ENCODE measurements at regions of chr1 and their contacts with region 1.

Region 1: DNA sequence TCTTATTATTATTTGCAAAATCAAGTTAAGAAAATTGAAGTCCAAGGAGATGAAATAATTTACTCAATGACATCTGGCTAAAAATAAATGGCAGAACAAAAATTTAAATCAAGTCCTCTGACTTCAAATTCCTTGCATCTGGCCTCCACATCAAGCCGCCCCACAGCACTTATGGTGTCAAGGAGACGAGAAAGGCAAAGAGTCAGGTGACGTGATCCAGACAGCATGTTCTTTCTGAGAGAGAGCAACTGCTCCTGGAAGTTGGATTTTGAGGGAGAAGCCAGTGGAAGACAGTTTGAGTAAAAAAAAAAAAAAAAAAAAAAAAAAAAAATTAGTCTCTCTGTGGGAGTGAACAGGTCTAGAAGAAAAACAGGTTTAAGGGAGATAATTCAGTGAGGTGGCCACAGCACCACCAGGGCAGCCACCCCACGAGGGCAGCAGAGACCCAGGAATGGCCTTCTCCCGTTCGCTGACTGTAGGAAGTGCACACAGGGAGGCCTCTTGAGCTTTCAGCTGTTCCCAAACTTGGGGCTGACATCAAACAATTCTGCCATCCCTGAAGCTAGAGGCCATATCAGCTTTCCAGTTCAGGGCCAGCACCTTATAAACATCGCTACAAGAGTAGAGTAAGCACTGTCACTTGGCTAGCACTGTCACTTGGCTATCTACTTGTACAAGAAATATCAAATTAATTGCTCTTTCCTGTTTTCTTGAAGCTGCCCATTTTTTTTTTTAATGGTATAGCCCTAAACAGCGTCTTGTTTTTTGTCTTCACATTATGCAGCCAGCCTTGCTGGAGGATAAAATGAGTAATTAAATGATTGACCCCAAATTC is 7.8 kb downstream of the C1orf162 start:
- DNase-seq: peak; percentile 76
- ATAC-seq: peak; percentile 52
- H3K4me3 ChIP-seq: no peak overlapping the region
- H3K4me3 Mint-ChIP-seq: no peak overlapping the region
- H3K27ac ChIP-seq: no peak overlapping the region
- H3K27ac Mint-ChIP-seq: peak overlapping the region; percentile 43
- H3K4me1 ChIP-seq: peaks cover 38 to 42% of the 10 kb centered on the region in 2 donors
- H3K4me1 Mint-ChIP-seq: peaks cover 46% of the 10 kb centered on the region
- H3K27me3 ChIP-seq: no peaks in the 10 kb centered on the region
- H3K27me3 Mint-ChIP-seq: no peaks in the 10 kb centered on the region
- CTCF ChIP-seq: peak; percentile 55

Region 2: DNA sequence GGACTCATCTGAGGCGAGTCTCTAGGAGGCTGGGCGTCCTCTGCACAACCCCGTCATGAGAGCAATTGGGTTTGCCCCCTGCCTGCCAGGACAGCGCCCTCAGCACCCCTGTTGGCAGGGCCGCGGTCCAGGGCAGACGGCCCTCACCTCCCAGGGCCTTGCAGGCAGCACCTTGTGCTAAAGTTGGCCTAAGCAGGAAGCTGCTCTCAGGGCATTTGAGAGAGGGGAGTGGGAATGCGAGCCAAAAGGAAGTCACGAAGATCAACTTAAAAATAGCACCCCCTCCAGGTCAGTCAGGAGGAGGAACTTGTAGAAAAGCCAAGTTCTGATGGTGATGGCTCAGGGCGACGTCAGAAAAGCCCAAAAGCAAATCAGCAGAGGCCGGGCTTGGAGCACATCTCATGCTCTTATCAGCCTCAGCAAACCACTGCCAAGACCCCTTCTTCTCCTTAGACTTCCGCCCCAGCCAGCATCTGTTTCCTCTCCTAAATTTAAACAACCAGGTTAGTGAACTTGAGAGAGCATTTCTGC is 34.5 kb after region 1 on chr1:
- CTCF ChIA-PET with region 1: interaction called, 13 read pairs
- POLR2A ChIA-PET with region 1: no interaction called
- intact Hi-C with region 1: no loop called
- DNase-seq: peak; percentile 86
- ATAC-seq: peak; percentile 75
- H3K4me3 ChIP-seq: peak overlapping the region; percentile 55 to 75 (median 61)
- H3K4me3 Mint-ChIP-seq: peak overlapping the region; percentile 90
- H3K27ac ChIP-seq: peak overlapping the region; percentile 81
- H3K27ac Mint-ChIP-seq: peak overlapping the region; percentile 84
- H3K4me1 ChIP-seq: peaks cover 30 to 34% of the 10 kb centered on the region in 2 donors
- H3K4me1 Mint-ChIP-seq: peaks cover 37% of the 10 kb centered on the region
- H3K27me3 ChIP-seq: no peaks in the 10 kb centered on the region
- H3K27me3 Mint-ChIP-seq: no peaks in the 10 kb centered on the region
- CTCF ChIP-seq: peak; percentile 74

Region 3: GRCh38 chr1:111747282-111747734 is 265.7 kb after region 1 on chr1:
- CTCF ChIA-PET with region 1: interaction called, 20 read pairs
- POLR2A ChIA-PET with region 1: no interaction called
- intact Hi-C with region 1: loop called (anchors 1 kb)
- DNase-seq: peak; percentile 70
- ATAC-seq: peak; percentile 68
- H3K4me3 ChIP-seq: no peak overlapping the region
- H3K4me3 Mint-ChIP-seq: no peak overlapping the region
- H3K27ac ChIP-seq: no peak overlapping the region
- H3K27ac Mint-ChIP-seq: no peak overlapping the region
- H3K4me1 ChIP-seq: no peaks in the 10 kb centered on the region
- H3K4me1 Mint-ChIP-seq: peaks cover 2% of the 10 kb centered on the region
- H3K27me3 ChIP-seq: peaks cover 0 to 3% (median 0%) of the 10 kb centered on the region in 4 experiments
- H3K27me3 Mint-ChIP-seq: no peaks in the 10 kb centered on the region
- CTCF ChIP-seq: peak; percentile 47

Region 4: GRCh38 chr1:111755331-111756123 is 273.9 kb after region 1 on chr1 and contains the start of gene DDX20:
- CTCF ChIA-PET with region 1: interaction called, 12 read pairs
- POLR2A ChIA-PET with region 1: no interaction called
- intact Hi-C with region 1: no loop called
- DNase-seq: peak; percentile 98
- ATAC-seq: peak; percentile 92
- H3K4me3 ChIP-seq: peak within 1 kb of the TSS; percentile 62 to 95 (median 74)
- H3K4me3 Mint-ChIP-seq: peak within 1 kb of the TSS; percentile 88
- H3K27ac ChIP-seq: peak within 1 kb of the TSS; percentile 91 to 96
- H3K27ac Mint-ChIP-seq: peak within 1 kb of the TSS; percentile 94
- H3K4me1 ChIP-seq: peaks cover 14 to 16% of the 10 kb centered on the region in 2 donors
- H3K4me1 Mint-ChIP-seq: peaks cover 31% of the 10 kb centered on the region
- H3K27me3 ChIP-seq: no peaks in the 10 kb centered on the region
- H3K27me3 Mint-ChIP-seq: no peaks in the 10 kb centered on the region
- CTCF ChIP-seq: peak; percentile 95
- total RNA-seq, gene DDX20: 22.3 and 24.6 TPM in 2 replicates

Measured in B cell (primary cell).